Ascending aorta (tissue), 2 donors: ENCODE measurements at regions of chr13 and their contacts with region 1.

Region 1: DNA sequence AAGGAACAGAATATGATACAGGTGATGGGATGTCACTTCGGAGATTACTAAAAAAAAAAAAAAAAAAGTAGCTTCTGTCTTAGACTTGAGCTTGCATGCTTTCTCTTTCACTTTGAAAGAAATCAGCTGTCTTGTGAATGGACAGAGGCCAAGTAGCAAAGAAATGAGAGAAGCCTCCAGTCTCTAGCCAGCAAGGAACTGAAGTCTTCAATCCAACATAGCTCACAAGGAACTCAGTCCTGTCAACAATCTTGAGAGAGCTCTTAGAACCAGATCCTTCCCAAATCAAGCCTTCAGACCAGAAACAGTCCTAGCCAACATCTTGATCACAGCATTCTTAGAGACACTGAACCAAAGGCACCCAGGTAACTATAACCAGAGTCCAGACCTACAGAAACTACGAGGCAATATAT is 7.7 kb downstream of the N4BP2L2 start:
- DNase-seq: no peak
- H3K4me3 ChIP-seq: peak overlapping the region in 1 of 2 donors; percentile 23
- H3K27ac ChIP-seq: peak overlapping the region in 1 of 2 donors; percentile 54
- H3K4me1 ChIP-seq: peaks cover 9 to 37% of the 10 kb centered on the region in 2 donors
- H3K27me3 ChIP-seq: no peaks in the 10 kb centered on the region
- CTCF ChIP-seq: no peak

Region 2: GRCh38 chr13:32639502-32640105 is 108.8 kb after region 1 on chr13:
- intact Hi-C with region 1: loop called (anchors 5 kb)
- DNase-seq: peak in 1 of 2 donors; percentile 80
- H3K4me3 ChIP-seq: no peak overlapping the region
- H3K27ac ChIP-seq: no peak overlapping the region
- H3K4me1 ChIP-seq: peaks cover 0 to 3% of the 10 kb centered on the region in 2 donors
- H3K27me3 ChIP-seq: no peaks in the 10 kb centered on the region
- CTCF ChIP-seq: peak; percentile 57 to 84 (median 69)

Region 3: GRCh38 chr13:33466262-33466661 is 935.4 kb after region 1 on chr13:
- intact Hi-C with region 1: no loop called
- DNase-seq: no peak
- H3K4me3 ChIP-seq: no peak overlapping the region
- H3K27ac ChIP-seq: no peak overlapping the region
- H3K4me1 ChIP-seq: no peaks in the 10 kb centered on the region
- H3K27me3 ChIP-seq: no peaks in the 10 kb centered on the region
- CTCF ChIP-seq: no peak